SK-N-SH (cell line): ENCODE measurements at regions of chr20 and their contacts with region 1.

Region 1: GRCh38 chr20:45373353-45374100 is 4.6 kb downstream of the TP53TG5 start:
- DNase-seq: peak; percentile 83
- H3K4me3 ChIP-seq: no peak overlapping the region
- H3K27ac ChIP-seq: no peak overlapping the region
- H3K4me1 ChIP-seq: no peaks in the 10 kb centered on the region
- H3K27me3 ChIP-seq: no peaks in the 10 kb centered on the region
- CTCF ChIP-seq: peak; percentile 76
- EP300 ChIP-seq: no peak
- RAD21 ChIP-seq: peak; percentile 74

Region 2: DNA sequence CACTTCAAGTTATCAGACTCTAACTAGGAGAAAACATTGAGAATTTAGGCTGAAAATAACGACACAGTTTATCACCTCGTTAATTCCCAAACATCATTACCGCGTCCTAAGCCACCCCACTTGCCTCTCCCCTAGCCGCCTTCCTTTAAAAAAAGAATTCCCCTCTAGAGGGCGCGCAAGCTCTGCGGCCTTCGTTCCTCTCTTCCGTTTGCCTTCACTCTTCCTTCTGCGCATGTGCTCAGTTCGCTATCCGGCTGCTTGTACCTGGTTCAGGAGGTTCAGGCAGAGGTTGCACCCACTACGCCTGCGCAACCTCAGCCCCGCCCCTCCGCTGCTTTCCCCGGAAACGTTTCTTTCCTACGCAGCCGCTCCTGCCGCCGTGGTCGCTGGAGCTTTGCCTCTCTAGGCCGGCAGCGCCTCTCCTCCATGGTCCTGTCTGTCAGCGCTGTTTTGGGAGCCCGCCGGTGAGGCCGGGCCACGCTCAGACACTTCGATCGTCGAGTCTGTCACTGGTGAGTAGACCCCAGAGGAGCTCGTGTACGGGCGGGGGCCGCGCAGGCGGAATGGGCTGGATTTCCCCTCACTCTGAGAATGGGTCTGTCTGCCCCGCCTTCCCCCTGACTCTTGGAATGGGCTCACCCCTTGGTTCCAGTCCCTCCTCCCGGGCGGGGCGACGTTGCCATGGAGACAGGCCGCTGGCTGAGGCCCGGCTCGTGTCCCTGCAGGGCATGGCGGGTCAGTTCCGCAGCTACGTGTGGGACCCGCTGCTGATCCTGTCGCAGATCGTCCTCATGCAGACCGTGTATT is 10.5 kb before region 1 on chr20 and contains the start of gene SYS1:
- CTCF ChIA-PET with region 1: interaction called, 55 read pairs
- POLR2A ChIA-PET with region 1: interaction called, 3 read pairs
- DNase-seq: peak; percentile 96
- H3K4me3 ChIP-seq: peak within 1 kb of the TSS; percentile 80 to 92
- H3K27ac ChIP-seq: peak within 1 kb of the TSS; percentile 91 to 97
- H3K4me1 ChIP-seq: peaks cover 0 to 11% of the 10 kb centered on the region in 2 experiments; a peak in 2 of 4 replicates
- H3K27me3 ChIP-seq: no peaks in the 10 kb centered on the region
- CTCF ChIP-seq: peak; percentile 88
- EP300 ChIP-seq: peak; percentile 13 to 15; a peak in 1 of 4 replicates
- RAD21 ChIP-seq: peak; percentile 87
- polyA plus RNA-seq, gene SYS1: 26.5 and 26.9 TPM in 2 replicates

Region 3: GRCh38 chr20:45406259-45407066 is 32.9 kb after region 1 on chr20:
- CTCF ChIA-PET with region 1: interaction called, 40 read pairs
- POLR2A ChIA-PET with region 1: no interaction called
- DNase-seq: peak; percentile 80
- H3K4me3 ChIP-seq: peak overlapping the region; percentile 66 to 76
- H3K27ac ChIP-seq: no peak overlapping the region; a peak in 1 of 4 replicates
- H3K4me1 ChIP-seq: peaks cover 0 to 8% of the 10 kb centered on the region in 2 experiments; a peak in 1 of 4 replicates
- H3K27me3 ChIP-seq: no peaks in the 10 kb centered on the region
- CTCF ChIP-seq: no peak
- EP300 ChIP-seq: no peak
- RAD21 ChIP-seq: no peak

Region 4: GRCh38 chr20:45450097-45450818 is 76.7 kb after region 1 on chr20:
- CTCF ChIA-PET with region 1: interaction called, 39 read pairs
- POLR2A ChIA-PET with region 1: no interaction called
- DNase-seq: peak; percentile 41
- H3K4me3 ChIP-seq: no peak overlapping the region
- H3K27ac ChIP-seq: no peak overlapping the region
- H3K4me1 ChIP-seq: no peaks in the 10 kb centered on the region
- H3K27me3 ChIP-seq: peaks cover 17% of the 10 kb centered on the region; the same call in 1 of the 2 replicates
- CTCF ChIP-seq: peak; percentile 71
- EP300 ChIP-seq: no peak
- RAD21 ChIP-seq: peak; percentile 63

Region 5: DNA sequence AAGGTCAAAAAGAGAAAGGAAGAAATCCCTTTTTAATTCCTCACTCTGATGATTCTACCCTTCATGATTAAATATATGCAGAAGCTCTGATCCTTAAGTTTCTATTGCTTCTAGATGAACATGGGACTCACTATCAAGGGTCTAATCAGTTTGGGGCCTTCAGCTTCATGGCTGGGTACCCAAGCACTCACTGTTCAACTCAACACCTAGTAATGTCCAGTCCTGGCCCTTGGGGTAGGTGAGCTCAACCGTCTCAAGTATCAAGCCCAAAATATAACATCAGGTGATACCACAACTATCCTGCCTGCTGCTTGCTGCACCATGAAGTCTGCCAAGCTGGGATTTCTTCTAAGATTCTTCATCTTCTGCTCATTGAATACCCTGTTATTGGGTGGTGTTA is 348.5 kb after region 1 on chr20 and contains the start of gene SPINT4:
- CTCF ChIA-PET with region 1: no interaction called
- POLR2A ChIA-PET with region 1: no interaction called
- DNase-seq: no peak
- H3K4me3 ChIP-seq: no peak within 1 kb of the TSS
- H3K27ac ChIP-seq: no peak within 1 kb of the TSS
- H3K4me1 ChIP-seq: no peaks in the 10 kb centered on the region
- H3K27me3 ChIP-seq: no peaks in the 10 kb centered on the region
- CTCF ChIP-seq: no peak
- EP300 ChIP-seq: no peak
- RAD21 ChIP-seq: no peak
- polyA plus RNA-seq, gene SPINT4: not detected in 2 replicates

Region 6: GRCh38 chr20:45993197-45993951 is 619.8 kb after region 1 on chr20:
- CTCF ChIA-PET with region 1: no interaction called
- POLR2A ChIA-PET with region 1: no interaction called
- DNase-seq: peak; percentile 40
- H3K4me3 ChIP-seq: no peak overlapping the region
- H3K27ac ChIP-seq: no peak overlapping the region
- H3K4me1 ChIP-seq: peaks cover 0 to 2% of the 10 kb centered on the region in 2 experiments; a peak in 2 of 4 replicates
- H3K27me3 ChIP-seq: no peaks in the 10 kb centered on the region; the same call in 1 of the 2 replicates
- CTCF ChIP-seq: no peak
- EP300 ChIP-seq: no peak
- RAD21 ChIP-seq: no peak